Activated CD8-positive, alpha-beta T cell treated with anti-CD3 and anti-CD28 coated beads, Interleukin-2, amount 10 ng/mL, durations not matched to agents 7 days and 5 days (primary cell): ENCODE measurements at regions of chr1 and their contacts with region 1.

Region 1: DNA sequence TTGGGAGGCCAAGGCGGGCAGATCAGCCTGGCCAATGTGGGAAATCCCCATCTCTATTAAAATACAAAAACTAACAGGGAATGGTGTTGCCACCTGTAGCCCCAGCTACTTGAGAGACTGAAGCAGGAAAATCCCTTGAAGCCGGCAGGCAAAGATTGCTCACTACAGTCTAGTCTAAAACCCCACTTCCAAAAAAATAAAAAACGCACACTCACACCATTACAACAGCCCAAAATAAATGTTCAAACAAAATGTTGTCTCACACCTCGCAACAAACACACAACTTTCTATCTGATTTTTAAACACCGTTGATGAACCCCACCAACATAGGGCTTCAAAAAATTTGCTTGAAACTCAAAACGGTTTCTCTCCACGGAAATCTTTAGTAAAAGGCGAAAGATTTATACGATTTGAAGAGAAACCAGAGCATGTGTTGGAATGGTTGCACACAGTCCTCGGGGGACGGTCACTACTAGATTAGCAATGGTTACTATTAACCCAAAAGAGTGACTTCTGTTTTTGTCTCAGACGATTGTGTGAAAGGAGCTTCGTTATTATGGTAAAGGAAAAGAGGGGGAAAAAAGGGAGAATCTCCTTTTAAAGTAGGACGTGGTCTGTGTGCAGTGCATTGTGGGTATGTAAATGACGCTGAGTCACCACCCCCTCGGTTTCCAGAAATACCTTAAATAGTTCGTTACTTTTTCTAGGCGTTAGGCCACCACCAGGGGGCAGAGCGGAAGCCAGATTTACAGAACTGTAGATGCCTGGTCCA is at the start of gene RNU5D-1:
- DNase-seq: peak; percentile 97
- ATAC-seq: peak; percentile 82
- H3K4me3 Mint-ChIP-seq: peak within 1 kb of the TSS; percentile 64
- H3K27ac Mint-ChIP-seq: peak within 1 kb of the TSS; percentile 99
- H3K4me1 Mint-ChIP-seq: peaks cover 45% of the 10 kb centered on the region
- H3K27me3 Mint-ChIP-seq: no peaks in the 10 kb centered on the region
- total RNA-seq, gene RNU5D-1: not detected

Region 2: GRCh38 chr1:44602634-44603628 is 128.0 kb before region 1 on chr1:
- CTCF ChIA-PET with region 1: no interaction called
- POLR2A ChIA-PET with region 1: no interaction called
- DNase-seq: no peak
- ATAC-seq: no peak
- H3K4me3 Mint-ChIP-seq: no peak overlapping the region
- H3K27ac Mint-ChIP-seq: no peak overlapping the region
- H3K4me1 Mint-ChIP-seq: no peaks in the 10 kb centered on the region
- H3K27me3 Mint-ChIP-seq: peaks cover 2% of the 10 kb centered on the region

Region 3: GRCh38 chr1:44645476-44646244 is 85.3 kb before region 1 on chr1:
- CTCF ChIA-PET with region 1: no interaction called
- POLR2A ChIA-PET with region 1: no interaction called
- DNase-seq: no peak
- ATAC-seq: no peak
- H3K4me3 Mint-ChIP-seq: no peak overlapping the region
- H3K27ac Mint-ChIP-seq: no peak overlapping the region
- H3K4me1 Mint-ChIP-seq: no peaks in the 10 kb centered on the region
- H3K27me3 Mint-ChIP-seq: no peaks in the 10 kb centered on the region

Region 4: GRCh38 chr1:44714944-44715571 is 15.9 kb before region 1 on chr1:
- CTCF ChIA-PET with region 1: interaction called, 35 read pairs
- POLR2A ChIA-PET with region 1: interaction called, 839 read pairs
- DNase-seq: peak; percentile 82
- ATAC-seq: peak; percentile 74
- H3K4me3 Mint-ChIP-seq: peak overlapping the region; percentile 40
- H3K27ac Mint-ChIP-seq: peak overlapping the region; percentile 76
- H3K4me1 Mint-ChIP-seq: peaks cover 48% of the 10 kb centered on the region
- H3K27me3 Mint-ChIP-seq: peaks cover 5% of the 10 kb centered on the region

Region 5: GRCh38 chr1:44775078-44775929 is 44.4 kb after region 1 on chr1 and contains the start of gene RPS8:
- CTCF ChIA-PET with region 1: interaction called, 6 read pairs
- POLR2A ChIA-PET with region 1: interaction called, 113 read pairs
- DNase-seq: peak; percentile 95
- ATAC-seq: peak; percentile 80
- H3K4me3 Mint-ChIP-seq: peak within 1 kb of the TSS; percentile 86
- H3K27ac Mint-ChIP-seq: peak within 1 kb of the TSS; percentile 97
- H3K4me1 Mint-ChIP-seq: peaks cover 33% of the 10 kb centered on the region
- H3K27me3 Mint-ChIP-seq: no peaks in the 10 kb centered on the region
- total RNA-seq, gene RPS8: 1,750 to 1,777 TPM

Region 6: DNA sequence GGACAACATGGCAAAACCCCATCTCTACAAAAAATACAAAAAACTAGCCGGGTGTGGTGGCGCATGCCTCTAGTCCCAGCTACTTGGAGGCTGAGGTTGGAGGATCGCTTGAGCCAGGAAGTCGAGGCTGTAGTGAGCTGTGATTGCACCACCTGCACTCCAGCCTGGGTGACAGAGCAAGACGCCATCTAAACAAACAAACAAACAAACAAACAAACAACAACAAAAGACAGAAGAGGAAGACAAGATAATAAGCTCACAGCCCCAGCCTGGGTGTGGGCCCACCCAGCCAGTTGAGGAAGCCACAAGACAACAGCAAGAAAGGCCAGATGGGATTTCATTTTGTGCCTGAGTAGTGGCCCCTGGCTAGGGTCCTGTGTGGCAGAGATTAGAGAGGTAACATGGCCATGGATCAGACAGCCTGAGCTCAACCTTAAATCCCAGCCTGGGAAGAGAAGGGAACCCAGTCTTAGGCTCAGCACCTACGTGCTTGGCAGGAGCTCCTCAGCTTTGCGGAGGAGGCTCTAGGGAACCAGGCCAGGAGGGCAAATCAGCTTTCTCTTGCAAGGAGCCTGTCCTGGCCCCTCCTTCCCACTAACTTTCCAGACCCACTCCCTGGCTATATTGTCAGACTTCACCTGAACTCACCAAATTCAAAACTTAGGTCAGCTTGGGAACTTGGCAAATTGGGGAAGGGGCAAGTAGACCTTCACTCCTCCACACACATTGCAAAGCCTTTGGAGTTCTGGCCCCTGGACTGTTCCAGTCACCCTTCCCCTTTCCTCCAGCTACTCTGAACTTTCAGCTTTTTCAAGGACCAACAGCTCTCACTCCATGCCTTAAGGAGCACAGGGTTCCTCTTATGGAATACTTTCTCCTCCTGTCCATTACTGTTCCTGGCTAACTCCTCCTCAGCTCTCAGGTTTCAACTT is 62.1 kb after region 1 on chr1:
- CTCF ChIA-PET with region 1: interaction called, 6 read pairs
- POLR2A ChIA-PET with region 1: interaction called, 76 read pairs
- DNase-seq: no peak
- ATAC-seq: no peak
- H3K4me3 Mint-ChIP-seq: no peak overlapping the region
- H3K27ac Mint-ChIP-seq: no peak overlapping the region
- H3K4me1 Mint-ChIP-seq: peaks cover 3% of the 10 kb centered on the region
- H3K27me3 Mint-ChIP-seq: no peaks in the 10 kb centered on the region

Region 7: GRCh38 chr1:44812822-44813543 is 82.1 kb after region 1 on chr1:
- CTCF ChIA-PET with region 1: interaction called, 13 read pairs
- POLR2A ChIA-PET with region 1: interaction called, 564 read pairs
- DNase-seq: no peak
- ATAC-seq: no peak
- H3K4me3 Mint-ChIP-seq: peak overlapping the region; percentile 84
- H3K27ac Mint-ChIP-seq: peak overlapping the region; percentile 100
- H3K4me1 Mint-ChIP-seq: peaks cover 70% of the 10 kb centered on the region
- H3K27me3 Mint-ChIP-seq: no peaks in the 10 kb centered on the region

Region 8: GRCh38 chr1:45339789-45340570 is 609.1 kb after region 1 on chr1 and contains the starts of genes MUTYH and TOE1:
- CTCF ChIA-PET with region 1: interaction called, 3 read pairs
- POLR2A ChIA-PET with region 1: interaction called, 16 read pairs
- DNase-seq: peak; percentile 97
- ATAC-seq: peak; percentile 91
- H3K4me3 Mint-ChIP-seq: peak within 1 kb of the TSS; percentile 100
- H3K27ac Mint-ChIP-seq: peak within 1 kb of the TSS; percentile 100
- H3K4me1 Mint-ChIP-seq: peaks cover 53% of the 10 kb centered on the region
- H3K27me3 Mint-ChIP-seq: no peaks in the 10 kb centered on the region
- total RNA-seq, gene MUTYH: 59.8 to 61.8 TPM
- total RNA-seq, gene TOE1: 25.4 to 25.9 TPM

Region 9: GRCh38 chr1:45359882-45360513 is 629.1 kb after region 1 on chr1:
- CTCF ChIA-PET with region 1: no interaction called
- POLR2A ChIA-PET with region 1: no interaction called
- DNase-seq: peak; percentile 68
- ATAC-seq: peak; percentile 74
- H3K4me3 Mint-ChIP-seq: no peak overlapping the region
- H3K27ac Mint-ChIP-seq: no peak overlapping the region
- H3K4me1 Mint-ChIP-seq: peaks cover 6% of the 10 kb centered on the region
- H3K27me3 Mint-ChIP-seq: no peaks in the 10 kb centered on the region